ENCODE measurements at regions of chr3 and their contacts with region 1.

Region 1: GRCh38 chr3:157159762-157160657 is at the start of gene CCNL1:
- DNase-seq: peak; percentile 96
- H3K4me3 ChIP-seq: peak within 1 kb of the TSS; percentile 87 to 99
- H3K27ac ChIP-seq: peak within 1 kb of the TSS; percentile 99 to 100
- H3K4me1 ChIP-seq: peaks cover 9% of the 10 kb centered on the region
- H3K27me3 ChIP-seq: no peaks in the 10 kb centered on the region
- CTCF ChIP-seq: peak in 2 of 4 experiments; percentile 17 to 23
- POLR2A ChIP-seq: peak; percentile 96
- total RNA-seq, gene CCNL1: 94.5 to 157 TPM

Region 2: DNA sequence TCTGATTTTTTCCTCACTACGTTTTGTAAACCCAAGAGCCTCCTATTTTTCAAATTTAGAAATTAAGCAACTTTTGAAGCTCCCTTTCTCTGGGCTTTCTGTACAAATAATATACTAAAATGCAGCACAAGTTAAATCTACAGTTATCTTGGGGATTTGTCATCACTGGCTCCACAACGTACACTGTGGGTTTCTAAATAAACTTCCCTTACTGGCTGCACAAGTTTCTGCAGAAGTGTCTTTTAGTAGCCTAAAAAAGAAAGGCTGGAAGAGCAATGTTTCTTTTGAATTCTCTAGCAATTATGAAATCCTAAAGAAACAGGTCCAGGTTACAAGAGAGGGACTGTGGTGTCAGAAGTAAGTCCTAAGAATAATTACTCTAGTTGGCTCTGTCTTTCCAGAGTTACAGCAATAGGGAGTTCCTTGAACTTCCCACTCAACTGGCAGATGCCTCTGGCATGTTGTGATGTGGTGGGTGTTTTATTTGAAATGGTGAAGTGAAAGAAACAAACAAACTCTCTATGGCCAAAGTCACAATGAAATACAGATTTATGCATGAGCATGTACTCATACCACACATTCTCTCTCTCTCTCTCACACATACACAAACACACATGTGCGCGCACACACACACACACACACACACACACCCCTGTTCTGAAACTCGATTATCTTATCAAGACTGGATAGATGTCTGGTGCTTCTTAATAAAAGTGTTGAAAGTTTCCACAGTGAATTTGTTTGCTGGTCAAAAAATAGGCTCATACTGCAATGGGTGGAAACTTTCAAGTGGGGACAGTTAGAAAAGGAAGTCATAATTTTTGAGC is 803.3 kb before region 1 on chr3:
- intact Hi-C with region 1: no loop called
- DNase-seq: no peak
- H3K4me3 ChIP-seq: no peak overlapping the region
- H3K27ac ChIP-seq: no peak overlapping the region
- H3K4me1 ChIP-seq: no peaks in the 10 kb centered on the region
- H3K27me3 ChIP-seq: no peaks in the 10 kb centered on the region
- CTCF ChIP-seq: no peak
- POLR2A ChIP-seq: no peak

Region 3: GRCh38 chr3:157081681-157082210 is 78.3 kb before region 1 on chr3:
- intact Hi-C with region 1: no loop called
- DNase-seq: peak; percentile 87
- H3K4me3 ChIP-seq: no peak overlapping the region
- H3K27ac ChIP-seq: peak overlapping the region; percentile 34 to 75
- H3K4me1 ChIP-seq: peaks cover 6% of the 10 kb centered on the region
- H3K27me3 ChIP-seq: no peaks in the 10 kb centered on the region
- CTCF ChIP-seq: peak; percentile 97 to 99 (median 98)
- POLR2A ChIP-seq: peak; percentile 70

Region 4: DNA sequence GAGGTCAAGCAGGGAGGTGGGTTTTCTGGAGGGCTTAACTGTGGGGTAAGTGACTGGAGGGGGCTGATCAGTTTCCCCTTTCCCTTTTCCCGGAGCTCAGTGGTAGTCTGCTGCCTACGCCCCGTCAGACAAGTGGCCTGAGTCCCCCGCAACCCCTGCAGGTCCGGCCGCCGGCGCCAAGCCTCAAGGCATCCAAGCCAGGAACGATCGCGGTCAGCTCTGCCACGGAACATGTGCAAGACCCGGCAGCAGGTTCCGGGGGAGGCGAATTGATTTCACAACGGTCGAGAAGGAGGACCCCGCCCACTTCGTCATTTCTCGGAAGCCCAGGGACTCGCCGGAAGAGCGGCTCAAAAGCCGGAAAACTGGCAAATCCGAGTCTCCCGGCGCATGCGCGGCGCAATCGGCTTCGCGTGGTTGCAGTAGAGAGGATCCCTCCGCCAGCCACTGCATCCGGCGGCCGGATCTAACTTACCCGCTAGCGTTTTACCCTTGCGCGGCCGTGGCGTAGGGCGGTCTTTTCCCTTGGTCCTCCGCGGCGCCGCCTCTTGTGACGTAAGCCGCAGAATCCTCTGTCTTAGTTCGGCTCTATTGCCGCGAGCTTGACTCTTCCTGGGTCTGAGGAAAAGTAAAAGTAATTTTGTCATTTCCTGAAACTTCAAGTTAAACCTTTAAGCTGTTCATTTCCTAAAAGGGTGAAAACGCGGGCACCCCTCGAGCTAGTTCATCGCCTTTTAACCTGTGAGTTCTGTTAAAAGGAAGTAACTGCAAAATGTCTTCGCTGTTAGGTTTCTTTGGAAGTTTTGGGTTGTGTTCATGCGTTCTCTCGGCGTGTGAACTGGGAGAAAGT is 14.9 kb after region 1 on chr3:
- intact Hi-C with region 1: loop called (anchors 1 kb)
- DNase-seq: peak; percentile 99
- H3K4me3 ChIP-seq: peak overlapping the region; percentile 53 to 62
- H3K27ac ChIP-seq: peak overlapping the region; percentile 99
- H3K4me1 ChIP-seq: peaks cover 5% of the 10 kb centered on the region
- H3K27me3 ChIP-seq: no peaks in the 10 kb centered on the region
- CTCF ChIP-seq: peak in 1 of 4 experiments; percentile 22
- POLR2A ChIP-seq: peak; percentile 86

Region 5: GRCh38 chr3:157573281-157573680 is 413.3 kb after region 1 on chr3:
- intact Hi-C with region 1: no loop called
- DNase-seq: no peak
- H3K4me3 ChIP-seq: no peak overlapping the region
- H3K27ac ChIP-seq: no peak overlapping the region
- H3K4me1 ChIP-seq: no peaks in the 10 kb centered on the region
- H3K27me3 ChIP-seq: no peaks in the 10 kb centered on the region
- CTCF ChIP-seq: no peak
- POLR2A ChIP-seq: no peak